Ascending aorta (tissue), 2 donors: ENCODE measurements at regions of chr17 and their contacts with region 1.

Region 1: DNA sequence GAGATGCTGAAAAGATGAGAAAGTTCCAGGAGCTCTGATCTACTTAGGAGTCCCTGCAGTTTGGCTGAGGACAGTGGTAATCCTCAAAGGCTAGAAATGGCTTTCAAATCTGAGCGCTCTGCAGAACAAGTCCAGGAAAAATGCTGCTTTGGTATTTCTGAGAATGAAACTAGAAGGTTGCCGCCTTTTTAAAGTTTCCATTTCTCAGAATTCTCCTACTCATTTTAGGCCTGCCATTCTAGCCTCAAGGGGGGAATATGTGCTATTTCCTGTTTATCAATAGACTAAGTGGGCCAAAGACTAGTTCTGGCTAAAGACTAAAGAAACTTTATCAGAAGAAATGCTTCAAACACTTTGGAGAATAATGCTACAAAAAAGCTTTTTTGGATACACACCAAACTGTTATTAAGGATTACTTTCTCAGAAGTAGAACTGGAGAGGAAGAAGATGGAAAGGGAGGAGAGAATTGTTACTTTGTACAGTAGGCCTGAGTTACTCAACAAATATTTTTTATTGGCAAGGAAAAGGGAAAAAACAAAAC is at the start of gene SLFN12L:
- DNase-seq: no peak
- H3K4me3 ChIP-seq: no peak within 1 kb of the TSS
- H3K27ac ChIP-seq: peak within 1 kb of the TSS in 1 of 2 donors; percentile 0
- H3K4me1 ChIP-seq: peaks cover 0 to 2% of the 10 kb centered on the region in 2 donors
- H3K27me3 ChIP-seq: no peaks in the 10 kb centered on the region
- CTCF ChIP-seq: no peak
- total RNA-seq, gene SLFN12L: not detected

Region 2: DNA sequence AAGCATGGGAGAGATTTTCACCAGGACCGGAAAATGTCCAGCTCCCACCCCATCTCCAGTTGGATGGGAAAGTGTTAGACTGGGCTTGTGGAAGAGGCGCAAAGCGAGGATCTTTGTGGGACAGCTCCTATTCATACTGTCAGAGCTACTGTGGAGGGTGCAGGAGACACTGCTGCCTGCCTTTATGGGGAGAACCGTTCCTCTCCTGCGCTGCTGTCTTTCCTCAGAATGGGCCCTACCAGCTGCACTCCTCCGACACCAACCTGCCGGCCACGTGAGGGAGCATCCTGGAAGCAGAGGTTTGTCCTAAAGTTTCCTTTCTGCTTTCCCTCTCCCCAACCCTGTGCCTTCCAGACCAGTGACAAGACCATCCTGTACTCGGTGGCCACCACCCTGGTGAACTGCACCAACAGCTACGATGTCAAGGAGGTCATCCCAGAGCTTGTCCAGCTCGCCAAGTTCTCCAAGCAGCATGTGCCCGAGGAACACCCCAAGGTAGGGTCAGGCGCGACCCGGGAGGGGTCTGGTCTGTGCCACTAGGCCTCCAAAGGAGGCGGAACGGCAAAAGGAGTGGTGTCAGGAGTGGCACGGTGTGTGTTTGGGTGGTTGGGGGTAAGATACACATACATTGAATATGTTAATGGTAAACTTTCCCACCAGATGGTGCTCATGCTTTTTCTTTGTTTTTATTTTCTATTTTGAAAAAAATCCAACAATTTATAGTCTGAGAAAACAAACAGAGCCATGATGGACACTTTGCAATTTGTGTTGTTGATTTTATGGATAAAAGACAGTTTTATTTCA is 366.5 kb before region 1 on chr17:
- intact Hi-C with region 1: loop called (anchors 10 kb)
- DNase-seq: peak in 1 of 2 donors; percentile 55
- H3K4me3 ChIP-seq: no peak overlapping the region
- H3K27ac ChIP-seq: no peak overlapping the region
- H3K4me1 ChIP-seq: no peaks in the 10 kb centered on the region
- H3K27me3 ChIP-seq: no peaks in the 10 kb centered on the region
- CTCF ChIP-seq: peak in 2 of 3 experiments; percentile 30 to 33

Region 3: GRCh38 chr17:35312790-35313711 is 224.6 kb before region 1 on chr17:
- intact Hi-C with region 1: loop called (anchors 1 kb)
- DNase-seq: peak; percentile 33 to 69
- H3K4me3 ChIP-seq: peak overlapping the region; percentile 41 to 61
- H3K27ac ChIP-seq: peak overlapping the region in 1 of 2 donors; percentile 61
- H3K4me1 ChIP-seq: peaks cover 3 to 18% of the 10 kb centered on the region in 2 donors
- H3K27me3 ChIP-seq: no peaks in the 10 kb centered on the region
- CTCF ChIP-seq: peak; percentile 63 to 82 (median 78)